RWPE1 (cell line): ENCODE measurements at regions of chr10 and their contacts with region 1.

Region 1: DNA sequence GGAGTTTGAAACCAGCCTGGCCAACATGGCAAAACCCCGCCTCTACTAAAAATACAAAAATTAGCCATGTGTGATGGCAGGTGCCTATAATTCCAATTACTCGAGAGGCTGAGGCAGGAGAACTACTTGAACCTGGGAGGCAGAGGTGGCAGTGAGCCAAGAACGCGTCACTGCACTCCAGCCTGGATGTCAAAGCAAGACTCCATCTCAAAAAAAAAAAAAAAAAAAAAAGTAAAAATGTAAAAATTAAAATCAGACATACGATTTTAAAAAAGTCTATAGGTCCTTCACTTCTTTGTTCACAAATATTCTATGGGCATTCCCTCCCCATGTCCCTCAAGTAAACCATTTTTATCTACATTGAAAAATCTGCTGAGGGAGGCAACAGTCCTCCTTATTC is 34.9 kb upstream of the TLL2 start:
- DNase-seq: no peak
- H3K27ac ChIP-seq: no peak overlapping the region
- CTCF ChIP-seq: no peak

Region 2: DNA sequence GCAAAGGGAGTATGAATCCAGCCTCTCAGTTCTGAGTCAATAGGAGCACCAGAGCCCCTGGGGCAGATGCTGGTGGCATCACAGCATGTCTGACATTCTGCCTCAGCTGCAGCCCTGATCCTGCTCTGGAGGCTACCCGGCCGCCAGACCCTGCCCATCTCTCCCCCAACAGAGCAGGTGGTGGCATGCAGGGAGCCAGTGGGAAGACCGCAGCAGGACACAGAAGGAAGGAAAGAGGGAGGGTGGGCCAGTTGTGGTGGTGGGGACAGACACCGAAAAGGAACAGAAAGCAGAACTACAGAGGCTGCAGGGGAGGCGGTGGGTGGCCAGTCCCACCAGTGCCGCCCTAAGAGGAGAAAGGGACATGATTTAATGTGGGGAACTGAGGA is 312.5 kb before region 1 on chr10:
- CTCF ChIA-PET with region 1: no interaction called
- POLR2A ChIA-PET with region 1: interaction called, 11 read pairs
- DNase-seq: no peak
- H3K27ac ChIP-seq: no peak overlapping the region
- CTCF ChIP-seq: no peak